Gastrocnemius medialis (tissue), 4 donors: ENCODE measurements at regions of chr6 and their contacts with region 1.

Region 1: DNA sequence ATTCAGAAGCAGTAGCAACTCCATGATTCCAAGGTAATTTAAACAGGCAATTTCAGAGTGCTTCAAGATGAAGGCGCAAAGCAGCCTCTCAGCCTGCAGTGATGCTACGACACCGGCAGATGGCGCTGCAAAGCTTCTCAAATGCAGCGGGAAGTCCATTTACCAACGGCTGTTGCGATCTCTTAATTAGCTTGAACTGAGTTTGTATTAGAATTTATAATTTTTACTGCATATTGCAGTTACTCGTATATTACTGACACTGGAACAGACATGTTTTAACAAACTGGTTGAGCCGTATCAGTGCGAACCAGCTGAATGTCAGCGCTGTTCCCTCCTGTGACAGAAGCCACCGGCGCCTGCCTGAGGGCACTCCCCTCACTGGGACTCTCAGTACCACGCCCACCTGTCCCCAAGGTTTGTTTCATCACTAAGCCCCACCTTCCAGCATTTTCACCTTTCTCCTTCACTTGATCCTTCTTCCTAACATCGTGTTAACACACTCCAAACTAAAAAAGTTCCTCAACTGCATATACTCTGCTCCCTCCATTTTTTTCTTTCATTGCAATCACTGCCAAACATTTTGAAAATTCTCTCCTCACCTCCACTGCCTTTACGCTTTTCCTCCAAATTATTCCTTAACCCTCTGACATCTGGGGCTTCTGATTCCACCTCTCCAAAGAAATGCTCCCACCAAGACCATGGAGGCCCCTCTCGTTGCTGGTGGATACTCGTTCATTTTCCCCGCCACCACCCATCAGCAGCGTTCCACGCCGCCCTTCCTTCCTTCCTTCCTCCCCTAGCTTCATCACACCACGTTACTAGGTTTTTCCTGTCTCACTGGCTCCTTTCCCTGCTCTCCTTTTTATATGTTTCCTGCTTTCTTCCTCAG is 14.5 kb downstream of the GNL1 start:
- DNase-seq: peak; percentile 45 to 64
- ATAC-seq: peak; percentile 78 to 90
- H3K4me3 ChIP-seq: peak overlapping the region; percentile 36 to 52 (median 40)
- H3K27ac ChIP-seq: peak overlapping the region in 3 of 4 donors; percentile 48 to 59 (median 53)
- H3K4me1 ChIP-seq: peaks cover 5 to 13% of the 10 kb centered on the region in 2 donors
- H3K27me3 ChIP-seq: no peaks in the 10 kb centered on the region
- CTCF ChIP-seq: peak; percentile 84 to 97 (median 93)
- POLR2A ChIP-seq: peak in 1 of 2 donors; percentile 39

Region 2: GRCh38 chr6:30483677-30484279 is 58.0 kb before region 1 on chr6:
- in situ Hi-C with region 1: loop called in 2 of 4 experiments (anchors 5 to 10 kb)
- intact Hi-C with region 1: loop called (anchors 5 kb)
- DNase-seq: no peak
- ATAC-seq: no peak
- H3K4me3 ChIP-seq: no peak overlapping the region
- H3K27ac ChIP-seq: peak overlapping the region in 1 of 4 donors; percentile 2
- H3K4me1 ChIP-seq: no peaks in the 10 kb centered on the region
- H3K27me3 ChIP-seq: peaks cover 38 to 46% (median 42%) of the 10 kb centered on the region in 3 donors
- CTCF ChIP-seq: peak; percentile 26 to 47 (median 44)
- POLR2A ChIP-seq: no peak

Region 3: DNA sequence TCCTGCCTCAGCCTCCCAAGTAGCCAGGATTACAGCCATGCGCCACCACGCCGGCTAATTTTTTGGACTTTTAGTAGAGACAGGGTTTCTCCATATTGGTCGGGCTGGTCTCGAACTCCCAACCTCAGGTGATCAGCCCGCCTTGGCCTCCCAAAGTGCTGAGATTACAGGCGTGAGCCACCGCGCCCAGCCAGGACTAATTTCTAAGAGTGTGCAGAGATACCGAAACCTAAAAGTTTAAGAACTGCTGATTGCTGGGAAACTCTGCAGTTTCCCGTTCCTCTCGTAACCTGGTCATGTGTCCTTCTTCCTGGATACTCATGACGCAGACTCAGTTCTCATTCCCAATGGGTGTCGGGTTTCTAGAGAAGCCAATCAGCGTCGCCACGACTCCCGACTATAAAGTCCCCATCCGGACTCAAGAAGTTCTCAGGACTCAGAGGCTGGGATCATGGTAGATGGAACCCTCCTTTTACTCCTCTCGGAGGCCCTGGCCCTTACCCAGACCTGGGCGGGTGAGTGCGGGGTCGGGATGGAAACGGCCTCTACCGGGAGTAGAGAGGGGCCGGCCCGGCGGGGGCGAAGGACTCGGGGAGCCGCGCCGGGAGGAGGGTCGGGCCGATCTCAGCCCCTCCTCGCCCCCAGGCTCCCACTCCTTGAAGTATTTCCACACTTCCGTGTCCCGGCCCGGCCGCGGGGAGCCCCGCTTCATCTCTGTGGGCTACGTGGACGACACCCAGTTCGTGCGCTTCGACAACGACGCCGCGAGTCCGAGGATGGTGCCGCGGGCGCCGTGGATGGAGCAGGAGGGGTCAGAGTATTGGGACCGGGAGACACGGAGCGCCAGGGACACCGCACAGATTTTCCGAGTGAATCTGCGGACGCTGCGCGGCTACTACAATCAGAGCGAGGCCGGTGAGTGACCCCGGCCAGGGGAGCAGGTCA is 52.4 kb before region 1 on chr6 and contains the start of gene HLA-E:
- in situ Hi-C with region 1: loop called in 2 of 4 experiments (anchors 5 to 10 kb)
- intact Hi-C with region 1: loop called (anchors 5 kb)
- DNase-seq: peak; percentile 91
- ATAC-seq: peak; percentile 100
- H3K4me3 ChIP-seq: peak within 1 kb of the TSS; percentile 55 to 91 (median 76)
- H3K27ac ChIP-seq: peak within 1 kb of the TSS; percentile 77 to 95 (median 86)
- H3K4me1 ChIP-seq: peaks cover 0 to 3% of the 10 kb centered on the region in 2 donors
- H3K27me3 ChIP-seq: peaks cover 5 to 10% (median 9%) of the 10 kb centered on the region in 3 donors
- CTCF ChIP-seq: no peak
- POLR2A ChIP-seq: peak; percentile 83 to 92
- total RNA-seq, gene HLA-E: 135 to 248 (median 157) TPM

Region 4: DNA sequence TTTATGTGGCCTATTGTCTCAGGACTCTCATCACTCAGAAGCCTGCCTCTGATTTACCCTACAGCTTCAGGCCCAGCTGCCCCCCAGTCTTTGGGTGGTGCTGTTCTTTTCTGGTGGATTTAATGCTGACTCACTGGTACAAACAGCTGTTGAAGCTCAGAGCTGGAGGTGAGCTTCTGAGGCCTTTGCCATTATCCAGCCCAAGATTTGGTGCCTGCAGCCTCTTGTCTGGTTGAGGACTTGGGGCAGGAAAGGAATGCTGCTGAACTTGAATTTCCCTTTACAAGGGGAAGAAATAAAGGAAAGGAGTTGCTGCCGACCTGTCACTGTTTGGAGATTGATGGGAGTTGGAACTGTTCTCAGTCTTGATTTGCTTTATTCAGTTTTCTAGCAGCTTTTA is 49.2 kb after region 1 on chr6:
- in situ Hi-C with region 1: no loop called
- intact Hi-C with region 1: loop called (anchors 2 kb)
- DNase-seq: no peak
- ATAC-seq: peak; percentile 13 to 43
- H3K4me3 ChIP-seq: no peak overlapping the region
- H3K27ac ChIP-seq: peak overlapping the region; percentile 61 to 77 (median 71)
- H3K4me1 ChIP-seq: peaks cover 0 to 4% of the 10 kb centered on the region in 2 donors
- H3K27me3 ChIP-seq: no peaks in the 10 kb centered on the region
- CTCF ChIP-seq: no peak
- POLR2A ChIP-seq: no peak

Region 5: GRCh38 chr6:30897882-30898281 is 356.1 kb after region 1 on chr6:
- in situ Hi-C with region 1: no loop called
- intact Hi-C with region 1: no loop called
- DNase-seq: no peak
- ATAC-seq: no peak
- H3K4me3 ChIP-seq: no peak overlapping the region
- H3K27ac ChIP-seq: no peak overlapping the region
- H3K4me1 ChIP-seq: no peaks in the 10 kb centered on the region
- H3K27me3 ChIP-seq: no peaks in the 10 kb centered on the region
- CTCF ChIP-seq: no peak
- POLR2A ChIP-seq: no peak

Region 6: DNA sequence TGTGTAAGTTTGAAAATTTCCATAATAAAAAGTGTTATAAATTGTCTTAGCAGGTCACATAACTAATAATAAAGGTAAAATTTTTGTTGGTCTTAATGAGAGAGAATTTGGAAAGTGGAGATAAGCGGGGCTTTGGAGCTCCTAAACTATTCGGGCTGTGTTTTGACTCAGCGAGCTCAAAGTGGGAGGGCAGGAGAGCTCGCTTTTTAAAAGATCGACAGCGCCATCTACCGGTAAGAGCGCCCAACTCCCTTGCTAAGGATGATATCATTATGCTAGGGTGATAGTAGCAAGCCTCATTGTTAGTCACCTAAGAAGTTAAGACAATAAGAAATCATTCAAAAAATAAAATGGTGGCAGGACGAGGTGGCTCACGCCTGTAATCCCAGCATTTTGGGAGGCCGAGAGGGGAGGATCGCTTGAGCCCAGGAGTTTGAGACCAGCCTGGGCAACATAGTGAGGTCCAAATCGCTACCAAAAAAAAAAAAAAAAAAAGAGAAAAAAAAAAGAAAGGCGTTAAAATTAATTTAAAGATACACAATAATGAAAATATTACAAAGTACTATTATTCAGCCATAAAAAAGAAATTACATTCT is 545.8 kb after region 1 on chr6:
- in situ Hi-C with region 1: loop called in 2 of 4 experiments (anchors 25 kb)
- intact Hi-C with region 1: loop called (anchors 5 kb)
- DNase-seq: peak; percentile 59 to 73
- ATAC-seq: peak; percentile 93 to 99
- H3K4me3 ChIP-seq: peak overlapping the region in 3 of 4 donors; percentile 11 to 36 (median 13)
- H3K27ac ChIP-seq: peak overlapping the region in 3 of 4 donors; percentile 1 to 36 (median 25)
- H3K4me1 ChIP-seq: peaks cover 8 to 9% of the 10 kb centered on the region in 2 donors
- H3K27me3 ChIP-seq: no peaks in the 10 kb centered on the region
- CTCF ChIP-seq: peak; percentile 74 to 82 (median 81)
- POLR2A ChIP-seq: no peak